Endothelial cell of umbilical vein (primary cell): ENCODE measurements at regions of chr1 and their contacts with region 1.

Region 1: GRCh38 chr1:113140588-113141446 is 67.8 kb downstream of the LRIG2 start:
- DNase-seq: peak; percentile 64
- H3K4me3 ChIP-seq: no peak overlapping the region
- H3K27ac ChIP-seq: no peak overlapping the region
- H3K4me1 ChIP-seq: peaks cover 26% of the 10 kb centered on the region
- H3K27me3 ChIP-seq: no peaks in the 10 kb centered on the region
- CTCF ChIP-seq: peak; percentile 77 to 87
- POLR2A ChIP-seq: no peak

Region 2: DNA sequence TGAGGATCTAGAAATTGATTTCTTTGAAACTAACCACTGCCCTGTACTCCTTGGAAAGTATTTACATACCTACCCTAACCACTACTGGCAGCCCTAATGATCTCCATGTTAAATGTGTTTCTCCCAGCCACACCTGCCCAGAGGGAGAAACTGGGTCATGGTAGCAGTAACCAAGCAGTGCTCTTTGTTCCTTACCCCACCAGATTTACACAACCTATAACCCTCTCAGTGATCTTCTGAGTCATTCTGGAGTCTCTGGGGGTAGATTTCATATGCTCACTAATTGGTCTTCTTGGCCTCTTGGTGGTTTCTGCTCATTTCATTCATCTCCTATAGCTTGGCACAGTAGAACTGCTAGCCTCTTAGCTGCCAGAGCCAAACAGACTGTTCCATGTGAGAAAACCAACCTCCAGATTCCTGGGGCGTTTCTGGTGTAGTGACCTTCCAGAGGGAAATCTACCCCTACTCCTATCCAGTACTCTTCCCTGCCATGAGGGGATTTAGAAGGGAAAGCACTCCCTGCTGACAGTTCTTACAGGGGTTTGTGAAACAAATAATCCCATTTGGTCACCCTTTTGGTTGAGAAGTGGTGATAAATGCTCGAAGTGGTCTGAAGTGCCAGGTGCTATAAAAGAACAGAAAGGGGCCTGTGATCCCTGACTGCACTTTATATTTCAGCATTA is 104.0 kb before region 1 on chr1:
- CTCF ChIA-PET with region 1: no interaction called
- POLR2A ChIA-PET with region 1: no interaction called
- dilution Hi-C with region 1: no loop called
- intact Hi-C with region 1: no loop called
- DNase-seq: no peak
- H3K4me3 ChIP-seq: no peak overlapping the region
- H3K27ac ChIP-seq: no peak overlapping the region
- H3K4me1 ChIP-seq: peaks cover 20% of the 10 kb centered on the region
- H3K27me3 ChIP-seq: no peaks in the 10 kb centered on the region
- CTCF ChIP-seq: no peak
- POLR2A ChIP-seq: no peak

Region 3: GRCh38 chr1:113178522-113178921 is 37.7 kb after region 1 on chr1:
- CTCF ChIA-PET with region 1: interaction called, 32 read pairs
- POLR2A ChIA-PET with region 1: no interaction called
- dilution Hi-C with region 1: no loop called
- intact Hi-C with region 1: no loop called
- DNase-seq: peak; percentile 5
- H3K4me3 ChIP-seq: no peak overlapping the region
- H3K27ac ChIP-seq: no peak overlapping the region
- H3K4me1 ChIP-seq: no peaks in the 10 kb centered on the region
- H3K27me3 ChIP-seq: peaks cover 0 to 5% of the 10 kb centered on the region in 2 experiments
- CTCF ChIP-seq: peak in 1 of 2 donors; percentile 3
- POLR2A ChIP-seq: no peak

Region 4: GRCh38 chr1:113452921-113453770 is 312.3 kb after region 1 on chr1:
- CTCF ChIA-PET with region 1: interaction called, 18 read pairs
- POLR2A ChIA-PET with region 1: no interaction called
- dilution Hi-C with region 1: no loop called
- intact Hi-C with region 1: loop called (anchors 1 kb)
- DNase-seq: peak; percentile 60
- H3K4me3 ChIP-seq: no peak overlapping the region
- H3K27ac ChIP-seq: no peak overlapping the region
- H3K4me1 ChIP-seq: peaks cover 30% of the 10 kb centered on the region
- H3K27me3 ChIP-seq: no peaks in the 10 kb centered on the region
- CTCF ChIP-seq: peak; percentile 19 to 44
- POLR2A ChIP-seq: no peak

Region 5: DNA sequence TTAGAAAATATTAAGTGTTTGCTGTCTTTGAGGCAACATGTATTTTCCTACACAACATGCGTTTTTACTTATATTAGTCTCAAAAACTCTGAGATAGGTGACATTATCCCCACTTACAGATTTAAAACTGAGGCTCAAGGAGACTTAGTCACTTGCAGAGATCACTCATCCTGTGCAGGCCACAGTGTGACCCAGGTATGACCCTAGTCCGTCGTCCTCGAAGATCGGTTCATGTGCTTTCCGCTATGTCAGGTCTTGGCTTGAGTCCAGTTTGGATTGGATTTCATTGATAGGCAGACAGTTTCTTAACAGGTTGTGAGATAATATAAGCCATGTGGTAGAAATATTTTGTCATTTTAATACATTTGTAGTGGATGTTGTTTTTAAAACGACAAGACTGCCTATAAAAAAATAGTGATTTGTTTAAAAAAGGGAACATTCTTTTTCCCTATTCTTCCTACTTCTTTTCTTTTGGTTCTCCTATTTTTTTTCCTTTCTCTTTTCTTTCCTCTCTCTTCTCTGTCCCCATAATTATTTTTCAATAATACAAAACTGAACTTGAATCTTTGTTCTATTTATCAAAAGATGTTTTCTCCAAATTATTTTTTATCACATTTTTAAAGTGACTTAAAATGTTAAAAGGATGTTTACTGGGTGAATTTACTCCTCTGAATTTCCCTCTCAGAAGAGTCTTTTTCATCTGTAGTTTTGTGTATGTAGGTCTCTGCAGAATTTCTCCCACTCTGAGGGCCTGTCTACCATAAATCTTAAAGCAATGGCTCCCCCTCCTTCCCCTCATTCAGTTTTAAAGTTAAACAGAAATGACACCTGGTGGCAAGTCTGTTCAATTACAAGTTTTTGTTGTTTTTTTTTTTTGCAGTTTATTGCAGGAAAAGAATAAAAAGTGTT is 536.7 kb after region 1 on chr1:
- CTCF ChIA-PET with region 1: interaction called, 52 read pairs
- POLR2A ChIA-PET with region 1: no interaction called
- dilution Hi-C with region 1: no loop called
- intact Hi-C with region 1: loop called (anchors 1 kb)
- DNase-seq: peak; percentile 67
- H3K4me3 ChIP-seq: no peak overlapping the region
- H3K27ac ChIP-seq: no peak overlapping the region
- H3K4me1 ChIP-seq: peaks cover 8% of the 10 kb centered on the region
- H3K27me3 ChIP-seq: no peaks in the 10 kb centered on the region
- CTCF ChIP-seq: peak; percentile 18 to 33
- POLR2A ChIP-seq: no peak

Region 6: GRCh38 chr1:113811888-113812660 is 671.3 kb after region 1 on chr1 and contains the start of gene RSBN1:
- CTCF ChIA-PET with region 1: no interaction called
- POLR2A ChIA-PET with region 1: no interaction called
- dilution Hi-C with region 1: no loop called
- intact Hi-C with region 1: loop called (anchors 5 kb)
- DNase-seq: peak; percentile 100
- H3K4me3 ChIP-seq: peak within 1 kb of the TSS; percentile 65 to 97 (median 74)
- H3K27ac ChIP-seq: peak within 1 kb of the TSS; percentile 81
- H3K4me1 ChIP-seq: peaks cover 26% of the 10 kb centered on the region
- H3K27me3 ChIP-seq: no peaks in the 10 kb centered on the region
- CTCF ChIP-seq: peak in 1 of 2 donors; percentile 8
- POLR2A ChIP-seq: peak; percentile 89
- total RNA-seq, gene RSBN1: 10.8 and 13.4 TPM in 2 replicates

Region 7: GRCh38 chr1:113904674-113905434 is 764.0 kb after region 1 on chr1 and contains the starts of genes AP4B1 and DCLRE1B:
- CTCF ChIA-PET with region 1: no interaction called
- POLR2A ChIA-PET with region 1: no interaction called
- dilution Hi-C with region 1: no loop called
- intact Hi-C with region 1: loop called (anchors 2 kb)
- DNase-seq: peak; percentile 100
- H3K4me3 ChIP-seq: peak within 1 kb of the TSS; percentile 55 to 86 (median 60)
- H3K27ac ChIP-seq: peak within 1 kb of the TSS; percentile 72
- H3K4me1 ChIP-seq: peaks cover 12% of the 10 kb centered on the region
- H3K27me3 ChIP-seq: no peaks in the 10 kb centered on the region
- CTCF ChIP-seq: peak; percentile 60 to 73
- POLR2A ChIP-seq: peak; percentile 96
- total RNA-seq, gene AP4B1: 29.4 and 33.0 TPM in 2 replicates
- total RNA-seq, gene DCLRE1B: 10.7 and 10.8 TPM in 2 replicates

Region 8: GRCh38 chr1:114219172-114219868 is 1078.5 kb after region 1 on chr1:
- CTCF ChIA-PET with region 1: no interaction called
- POLR2A ChIA-PET with region 1: no interaction called
- dilution Hi-C with region 1: no loop called
- intact Hi-C with region 1: no loop called
- DNase-seq: no peak
- H3K4me3 ChIP-seq: no peak overlapping the region
- H3K27ac ChIP-seq: no peak overlapping the region
- H3K4me1 ChIP-seq: no peaks in the 10 kb centered on the region
- H3K27me3 ChIP-seq: no peaks in the 10 kb centered on the region
- CTCF ChIP-seq: peak in 1 of 2 donors; percentile 4
- POLR2A ChIP-seq: no peak